Right cardiac atrium (tissue), 5 donors: ENCODE measurements at regions of chr19 and their contacts with region 1.

Region 1: GRCh38 chr19:1094975-1095701 is at the start of gene POLR2E:
- DNase-seq: peak; percentile 99
- ATAC-seq: peak; percentile 93
- H3K4me3 ChIP-seq: peak within 1 kb of the TSS; percentile 70
- H3K27ac ChIP-seq: no peak within 1 kb of the TSS
- H3K4me1 ChIP-seq: peaks cover 14% of the 10 kb centered on the region
- H3K27me3 ChIP-seq: no peaks in the 10 kb centered on the region
- total RNA-seq, gene POLR2E: 110 to 145 (median 131) TPM

Region 2: DNA sequence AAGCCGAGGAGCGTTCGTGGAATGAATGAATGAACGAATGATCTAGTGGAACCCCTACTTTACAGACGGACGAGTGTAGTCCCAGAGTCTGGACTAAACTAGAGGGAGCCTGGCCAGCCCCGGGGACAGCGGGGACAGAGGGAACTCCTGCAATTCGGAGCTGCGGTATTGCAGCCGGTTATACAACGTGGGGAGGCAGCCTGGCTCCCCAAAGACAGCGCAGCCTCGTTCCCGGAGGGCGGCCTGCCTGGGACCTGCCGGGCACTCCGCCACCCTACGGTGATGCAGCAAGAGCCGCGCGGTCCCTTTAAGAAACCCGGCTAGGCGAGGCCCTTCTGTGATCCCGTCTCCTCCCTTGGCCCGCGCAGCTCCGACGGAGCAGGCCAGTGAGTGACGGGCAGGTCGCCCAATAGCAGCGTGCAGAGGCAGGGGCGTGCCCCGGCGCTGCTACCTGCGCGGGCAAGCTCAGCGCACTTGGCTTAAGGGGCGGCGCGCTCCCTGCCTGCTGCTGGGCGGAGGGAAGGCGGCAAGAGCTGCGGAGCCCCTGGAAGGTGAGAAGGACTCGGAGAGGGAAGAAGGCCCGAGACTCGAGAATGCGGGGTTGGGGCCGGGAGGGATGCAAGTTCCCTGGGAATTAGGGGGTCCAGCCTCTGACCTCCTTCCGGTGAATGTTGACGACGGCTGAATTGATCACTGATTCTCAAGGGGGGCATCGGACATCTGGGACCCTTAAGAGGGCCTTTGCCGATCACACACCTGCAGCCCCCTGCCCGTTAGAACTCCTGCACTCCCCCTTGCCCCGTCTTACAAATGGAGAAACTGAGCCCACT is 55.3 kb before region 1 on chr19 and contains the start of gene ABCA7:
- intact Hi-C with region 1: loop called in 1 of 4 experiments (anchors 10 kb)
- DNase-seq: peak; percentile 97 to 100 (median 99)
- ATAC-seq: peak; percentile 95
- H3K4me3 ChIP-seq: peak within 1 kb of the TSS; percentile 33
- H3K27ac ChIP-seq: peak within 1 kb of the TSS; percentile 13
- H3K4me1 ChIP-seq: no peaks in the 10 kb centered on the region
- H3K27me3 ChIP-seq: no peaks in the 10 kb centered on the region
- total RNA-seq, gene ABCA7: 7.3 to 10.4 (median 8.7) TPM